Heart left ventricle (tissue), 16 donors: ENCODE measurements at regions of chr11 and their contacts with region 1.

Region 1: GRCh38 chr11:86869966-86870570 is 69.7 kb downstream of the PRSS23 start:
- DNase-seq: peak in 4 of 5 donors; percentile 44 to 69 (median 66)
- ATAC-seq: peak; percentile 73 to 88 (median 84)
- H3K4me3 ChIP-seq: no peak overlapping the region
- H3K27ac ChIP-seq: peak overlapping the region in 1 of 12 donors; percentile 18
- H3K4me1 ChIP-seq: peaks cover 0 to 17% (median 0%) of the 10 kb centered on the region in 12 donors
- H3K27me3 ChIP-seq: no peaks in the 10 kb centered on the region
- CTCF ChIP-seq: peak; percentile 73 to 91 (median 82)
- POLR2A ChIP-seq: no peak

Region 2: DNA sequence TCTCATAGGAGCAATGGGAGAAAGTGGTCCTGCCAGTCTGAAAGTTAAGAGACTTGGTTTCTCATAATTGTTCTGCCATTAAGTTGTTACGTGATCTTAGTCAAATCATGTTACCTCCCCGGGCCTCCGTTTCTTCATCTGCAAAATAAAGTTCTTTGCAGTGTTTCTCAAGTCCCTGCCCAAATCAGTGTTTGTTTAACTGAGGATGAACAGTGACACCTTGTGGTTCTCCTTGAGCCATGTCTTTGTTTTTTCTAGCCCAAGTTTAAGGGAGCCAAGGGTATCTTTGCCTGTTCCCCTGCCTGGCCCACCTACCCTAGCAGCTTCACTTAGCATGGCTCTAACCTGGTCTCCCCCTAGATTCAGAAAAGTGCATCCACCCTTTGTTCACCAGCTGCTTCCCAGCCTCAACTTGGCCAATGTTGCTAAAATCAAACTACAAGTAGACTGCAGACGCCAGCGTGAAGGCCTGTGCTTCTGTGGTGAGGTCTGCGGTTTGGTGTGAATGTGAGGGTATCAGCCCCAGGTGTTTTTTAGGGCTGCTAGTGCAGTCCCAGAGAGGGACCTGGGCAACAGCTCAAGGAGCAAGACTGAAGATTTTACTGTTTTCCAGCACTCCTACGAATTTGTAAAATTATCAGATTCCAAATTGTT is 49.6 kb after region 1 on chr11:
- intact Hi-C with region 1: loop called (anchors 1 to 5 kb)
- DNase-seq: peak in 1 of 5 donors; percentile 43
- ATAC-seq: peak in 3 of 4 donors; percentile 66 to 69 (median 68)
- H3K4me3 ChIP-seq: no peak overlapping the region
- H3K27ac ChIP-seq: peak overlapping the region in 11 of 12 donors; percentile 30 to 90 (median 79)
- H3K4me1 ChIP-seq: peaks cover 0 to 61% (median 31%) of the 10 kb centered on the region in 12 donors
- H3K27me3 ChIP-seq: no peaks in the 10 kb centered on the region
- CTCF ChIP-seq: peak; percentile 47 to 77 (median 66)
- POLR2A ChIP-seq: no peak

Region 3: DNA sequence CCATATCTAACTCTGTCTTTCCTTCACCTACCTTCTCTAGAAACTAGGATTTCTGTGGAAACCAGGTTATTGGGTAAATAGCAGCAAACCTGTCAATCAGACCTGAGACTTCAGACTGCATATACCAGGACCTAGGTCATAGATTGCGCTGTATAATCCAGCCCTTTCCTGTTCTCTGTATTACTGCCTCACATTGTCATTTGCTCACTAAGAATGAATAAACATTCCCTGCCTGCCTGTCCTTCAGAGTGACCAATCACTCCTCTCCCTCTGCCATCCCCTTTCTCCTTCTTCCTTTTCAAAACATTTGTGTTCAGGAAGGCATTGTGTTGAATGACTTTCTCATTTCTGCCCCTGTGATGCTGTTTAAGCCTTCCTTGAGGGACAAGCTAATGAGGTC is 99.2 kb after region 1 on chr11:
- intact Hi-C with region 1: no loop called
- DNase-seq: no peak
- ATAC-seq: no peak
- H3K4me3 ChIP-seq: no peak overlapping the region
- H3K27ac ChIP-seq: no peak overlapping the region
- H3K4me1 ChIP-seq: no peaks in the 10 kb centered on the region
- H3K27me3 ChIP-seq: no peaks in the 10 kb centered on the region
- CTCF ChIP-seq: no peak
- POLR2A ChIP-seq: no peak

Region 4: GRCh38 chr11:87281496-87281895 is 411.4 kb after region 1 on chr11:
- intact Hi-C with region 1: loop called in 1 of 10 experiments (anchors 5 kb)
- DNase-seq: no peak
- ATAC-seq: peak; percentile 65 to 84 (median 80)
- H3K4me3 ChIP-seq: no peak overlapping the region
- H3K27ac ChIP-seq: peak overlapping the region in 2 of 12 donors; percentile 10 to 27
- H3K4me1 ChIP-seq: peaks cover 0 to 20% (median 1%) of the 10 kb centered on the region in 12 donors
- H3K27me3 ChIP-seq: no peaks in the 10 kb centered on the region
- CTCF ChIP-seq: peak in 11 of 12 donors; percentile 12 to 64 (median 47)
- POLR2A ChIP-seq: no peak

Region 5: DNA sequence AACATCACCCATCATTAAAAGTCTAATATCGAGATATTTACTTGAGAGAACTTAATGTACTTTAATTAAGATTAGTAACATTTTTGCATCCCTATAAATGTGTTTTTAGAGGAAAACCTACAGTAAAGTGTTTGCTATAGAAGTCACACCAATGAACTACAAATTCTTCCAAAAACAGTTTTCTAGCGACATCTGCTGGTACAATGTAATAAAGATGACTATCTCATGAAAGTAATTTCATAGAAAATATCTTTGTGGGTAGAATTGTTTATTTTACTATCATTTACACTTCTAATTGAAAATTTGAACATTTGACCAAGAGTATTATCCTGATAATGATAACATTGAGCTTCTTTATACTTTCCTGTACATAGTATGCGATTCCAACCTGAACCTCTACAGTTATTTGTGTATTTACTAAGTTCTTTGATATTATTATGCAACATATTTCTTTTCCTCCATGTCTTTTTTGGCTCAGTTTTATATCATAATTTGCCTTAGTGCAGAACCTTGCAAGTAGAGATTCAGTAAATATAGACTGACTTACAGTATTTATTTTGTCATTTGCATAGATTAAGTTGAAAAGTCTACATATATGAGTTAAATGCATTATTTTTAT is 420.3 kb after region 1 on chr11:
- intact Hi-C with region 1: loop called in 8 of 10 experiments (anchors 2 to 5 kb)
- DNase-seq: no peak
- ATAC-seq: no peak
- H3K4me3 ChIP-seq: no peak overlapping the region
- H3K27ac ChIP-seq: no peak overlapping the region
- H3K4me1 ChIP-seq: peaks cover 0 to 7% (median 0%) of the 10 kb centered on the region in 12 donors
- H3K27me3 ChIP-seq: no peaks in the 10 kb centered on the region
- CTCF ChIP-seq: peak; percentile 54 to 80 (median 70)
- POLR2A ChIP-seq: no peak

Region 6: GRCh38 chr11:87299041-87299481 is 429.0 kb after region 1 on chr11:
- intact Hi-C with region 1: loop called in 7 of 10 experiments (anchors 5 kb)
- DNase-seq: no peak
- ATAC-seq: no peak
- H3K4me3 ChIP-seq: no peak overlapping the region
- H3K27ac ChIP-seq: no peak overlapping the region
- H3K4me1 ChIP-seq: peaks cover 0 to 13% (median 0%) of the 10 kb centered on the region in 12 donors
- H3K27me3 ChIP-seq: no peaks in the 10 kb centered on the region
- CTCF ChIP-seq: no peak
- POLR2A ChIP-seq: no peak

Region 7: DNA sequence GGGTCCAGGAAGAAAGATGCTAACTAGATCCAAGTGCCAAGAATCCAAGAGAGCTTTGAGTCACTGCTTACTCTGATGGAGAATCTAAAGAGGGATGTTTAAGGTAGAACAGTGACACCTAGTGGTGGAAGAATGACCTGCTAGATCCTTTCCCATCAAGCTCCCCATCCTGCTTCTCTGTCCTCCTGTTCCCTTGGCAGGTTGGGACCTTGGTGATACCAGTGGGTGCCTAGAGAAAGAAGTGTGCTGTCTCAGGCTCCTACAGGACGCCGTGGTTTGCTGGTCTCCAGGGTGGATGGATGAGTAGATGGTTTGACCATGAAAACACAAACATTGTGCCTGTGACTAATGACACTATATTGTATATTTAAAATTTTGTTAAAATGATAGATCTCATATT is 551.4 kb after region 1 on chr11:
- intact Hi-C with region 1: loop called in 3 of 10 experiments (anchors 5 to 10 kb)
- DNase-seq: peak in 3 of 5 donors; percentile 22 to 42 (median 32)
- ATAC-seq: peak; percentile 56 to 91 (median 86)
- H3K4me3 ChIP-seq: no peak overlapping the region
- H3K27ac ChIP-seq: no peak overlapping the region
- H3K4me1 ChIP-seq: peaks cover 0 to 22% (median 9%) of the 10 kb centered on the region in 12 donors
- H3K27me3 ChIP-seq: no peaks in the 10 kb centered on the region
- CTCF ChIP-seq: peak; percentile 73 to 90 (median 85)
- POLR2A ChIP-seq: no peak